WTC11 (cell line): ENCODE measurements at regions of chr11 and their contacts with region 1.

Region 1: DNA sequence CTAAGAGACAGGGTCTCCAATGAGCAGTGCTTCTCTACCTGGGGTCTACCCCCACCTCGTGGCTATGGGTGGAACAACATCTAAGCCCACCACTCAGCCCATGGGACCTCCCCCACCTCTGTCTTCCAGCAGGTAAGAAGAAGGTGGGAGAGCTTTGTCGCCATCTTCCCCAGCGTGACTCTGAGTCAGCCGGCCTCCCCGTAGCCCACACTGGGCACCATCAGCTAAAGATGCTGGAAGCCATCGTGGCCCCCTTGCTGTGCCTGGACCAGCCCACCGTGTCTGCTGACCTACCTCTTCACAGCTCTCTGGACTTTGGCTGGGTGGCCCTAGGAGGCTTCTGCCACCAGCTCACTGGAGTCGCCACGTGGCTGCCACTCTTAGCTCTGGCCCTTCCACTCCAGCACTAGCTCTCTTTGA is 954 bp downstream of the C11orf86 start:
- DNase-seq: peak; percentile 89
- ATAC-seq: peak; percentile 92
- H3K4me3 Mint-ChIP-seq: no peak overlapping the region
- H3K27ac Mint-ChIP-seq: no peak overlapping the region
- H3K4me1 Mint-ChIP-seq: peaks cover 11% of the 10 kb centered on the region
- H3K27me3 Mint-ChIP-seq: no peaks in the 10 kb centered on the region
- CTCF ChIP-seq: peak; percentile 86

Region 2: GRCh38 chr11:66855574-66856495 is 120.2 kb before region 1 on chr11:
- CTCF ChIA-PET with region 1: interaction called, 25 read pairs
- POLR2A ChIA-PET with region 1: no interaction called
- DNase-seq: peak; percentile 97
- ATAC-seq: peak; percentile 74
- H3K4me3 Mint-ChIP-seq: peak overlapping the region; percentile 87
- H3K27ac Mint-ChIP-seq: peak overlapping the region; percentile 99
- H3K4me1 Mint-ChIP-seq: peaks cover 17% of the 10 kb centered on the region
- H3K27me3 Mint-ChIP-seq: no peaks in the 10 kb centered on the region
- CTCF ChIP-seq: no peak

Region 3: GRCh38 chr11:66883016-66883968 is 92.8 kb before region 1 on chr11:
- CTCF ChIA-PET with region 1: interaction called, 30 read pairs
- POLR2A ChIA-PET with region 1: no interaction called
- DNase-seq: peak; percentile 91
- ATAC-seq: peak; percentile 91
- H3K4me3 Mint-ChIP-seq: no peak overlapping the region
- H3K27ac Mint-ChIP-seq: peak overlapping the region; percentile 91
- H3K4me1 Mint-ChIP-seq: peaks cover 41% of the 10 kb centered on the region
- H3K27me3 Mint-ChIP-seq: no peaks in the 10 kb centered on the region
- CTCF ChIP-seq: peak; percentile 54

Region 4: DNA sequence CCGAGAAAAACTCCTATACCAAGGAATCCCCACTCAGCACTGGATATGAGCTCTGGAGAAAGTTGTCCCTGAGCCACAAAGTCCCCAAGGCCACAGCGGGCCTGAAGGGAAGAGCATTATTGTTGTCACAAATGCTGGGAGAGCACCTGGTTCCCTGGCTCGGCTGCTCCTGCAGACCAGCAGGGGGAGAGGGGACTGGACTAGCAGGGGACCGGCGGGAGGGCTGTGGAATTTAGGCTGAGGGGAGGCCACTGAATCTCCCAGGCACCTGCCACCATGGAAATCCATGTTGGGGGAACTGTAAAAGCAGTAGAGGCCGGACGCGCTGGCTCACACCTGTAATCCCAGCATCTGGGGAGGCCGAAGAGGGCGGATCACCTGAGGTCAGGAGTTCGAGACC is 24.9 kb before region 1 on chr11:
- CTCF ChIA-PET with region 1: interaction called, 29 read pairs
- POLR2A ChIA-PET with region 1: no interaction called
- DNase-seq: peak; percentile 61
- ATAC-seq: peak; percentile 84
- H3K4me3 Mint-ChIP-seq: no peak overlapping the region
- H3K27ac Mint-ChIP-seq: peak overlapping the region; percentile 67
- H3K4me1 Mint-ChIP-seq: peaks cover 16% of the 10 kb centered on the region
- H3K27me3 Mint-ChIP-seq: no peaks in the 10 kb centered on the region
- CTCF ChIP-seq: no peak

Region 5: GRCh38 chr11:66987158-66987620 is 11.1 kb after region 1 on chr11:
- CTCF ChIA-PET with region 1: interaction called, 23 read pairs
- POLR2A ChIA-PET with region 1: no interaction called
- DNase-seq: peak; percentile 65
- ATAC-seq: peak; percentile 84
- H3K4me3 Mint-ChIP-seq: no peak overlapping the region
- H3K27ac Mint-ChIP-seq: no peak overlapping the region; the same call in 1 of the 2 replicates
- H3K4me1 Mint-ChIP-seq: peaks cover 27% of the 10 kb centered on the region
- H3K27me3 Mint-ChIP-seq: no peaks in the 10 kb centered on the region; the same call in 1 of the 2 replicates
- CTCF ChIP-seq: no peak

Region 6: GRCh38 chr11:67071420-67072284 is 95.6 kb after region 1 on chr11:
- CTCF ChIA-PET with region 1: no interaction called
- POLR2A ChIA-PET with region 1: no interaction called
- DNase-seq: peak; percentile 93
- ATAC-seq: peak; percentile 98
- H3K4me3 Mint-ChIP-seq: peak overlapping the region; percentile 53
- H3K27ac Mint-ChIP-seq: no peak overlapping the region
- H3K4me1 Mint-ChIP-seq: peaks cover 8% of the 10 kb centered on the region; the same call in 1 of the 2 replicates
- H3K27me3 Mint-ChIP-seq: no peaks in the 10 kb centered on the region; the same call in 1 of the 2 replicates
- CTCF ChIP-seq: peak; percentile 90

Region 7: GRCh38 chr11:67136156-67136555 is 160.1 kb after region 1 on chr11:
- CTCF ChIA-PET with region 1: no interaction called
- POLR2A ChIA-PET with region 1: no interaction called
- DNase-seq: no peak
- ATAC-seq: no peak
- H3K4me3 Mint-ChIP-seq: no peak overlapping the region
- H3K27ac Mint-ChIP-seq: no peak overlapping the region
- H3K4me1 Mint-ChIP-seq: no peaks in the 10 kb centered on the region
- H3K27me3 Mint-ChIP-seq: no peaks in the 10 kb centered on the region
- CTCF ChIP-seq: no peak

Region 8: GRCh38 chr11:67732045-67732787 is 756.2 kb after region 1 on chr11:
- CTCF ChIA-PET with region 1: no interaction called
- POLR2A ChIA-PET with region 1: no interaction called
- DNase-seq: peak; percentile 60
- ATAC-seq: peak; percentile 63
- H3K4me3 Mint-ChIP-seq: peak overlapping the region; percentile 66
- H3K27ac Mint-ChIP-seq: no peak overlapping the region
- H3K4me1 Mint-ChIP-seq: peaks cover 33% of the 10 kb centered on the region
- H3K27me3 Mint-ChIP-seq: peaks cover 4% of the 10 kb centered on the region; the same call in 1 of the 2 replicates
- CTCF ChIP-seq: peak; percentile 49; the same call in 1 of the 2 replicates